Activated CD4-positive, alpha-beta T cell treated with anti-CD3 and anti-CD28 coated beads for 36 hours (primary cell): ENCODE measurements at regions of chr1 and their contacts with region 1.

Region 1: GRCh38 chr1:73998348-73998959 is 199.5 kb downstream of the LRRIQ3 start:
- DNase-seq: no peak
- ATAC-seq: no peak
- H3K4me3 Mint-ChIP-seq: no peak overlapping the region
- H3K27ac Mint-ChIP-seq: no peak overlapping the region
- H3K4me1 Mint-ChIP-seq: no peaks in the 10 kb centered on the region
- H3K27me3 Mint-ChIP-seq: no peaks in the 10 kb centered on the region

Region 2: DNA sequence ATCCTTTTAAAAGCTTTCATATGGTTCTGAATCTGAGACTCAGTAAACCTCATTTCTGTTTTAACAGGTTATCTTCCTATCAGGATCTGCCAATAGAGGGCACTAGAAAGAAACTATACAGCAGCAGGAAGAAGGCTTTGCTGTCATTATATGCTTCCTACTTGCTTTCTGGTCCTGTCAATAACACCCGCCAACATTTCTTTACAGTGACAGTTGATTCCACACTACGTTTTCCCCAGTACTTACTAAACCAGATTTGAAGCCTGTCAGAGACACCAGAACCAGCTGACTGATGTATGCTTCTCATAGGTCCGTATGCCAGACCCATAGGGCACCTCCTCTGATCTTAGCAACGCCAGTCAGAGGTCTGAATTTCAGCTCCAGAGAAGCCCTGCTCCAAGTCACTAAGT is 1375.2 kb before region 1 on chr1:
- CTCF ChIA-PET with region 1: no interaction called
- POLR2A ChIA-PET with region 1: no interaction called
- intact Hi-C with region 1: loop called in 1 of 2 experiments (anchors 2 kb)
- DNase-seq: no peak
- ATAC-seq: peak; percentile 73
- H3K4me3 Mint-ChIP-seq: no peak overlapping the region
- H3K27ac Mint-ChIP-seq: no peak overlapping the region
- H3K4me1 Mint-ChIP-seq: no peaks in the 10 kb centered on the region
- H3K27me3 Mint-ChIP-seq: no peaks in the 10 kb centered on the region

Region 3: GRCh38 chr1:73943270-73943669 is 55.2 kb before region 1 on chr1:
- CTCF ChIA-PET with region 1: no interaction called
- POLR2A ChIA-PET with region 1: no interaction called
- intact Hi-C with region 1: no loop called
- DNase-seq: no peak
- ATAC-seq: no peak
- H3K4me3 Mint-ChIP-seq: no peak overlapping the region
- H3K27ac Mint-ChIP-seq: no peak overlapping the region
- H3K4me1 Mint-ChIP-seq: no peaks in the 10 kb centered on the region
- H3K27me3 Mint-ChIP-seq: no peaks in the 10 kb centered on the region